Psoas muscle (tissue), 8 donors: ENCODE measurements at regions of chr6 and their contacts with region 1.

Region 1: DNA sequence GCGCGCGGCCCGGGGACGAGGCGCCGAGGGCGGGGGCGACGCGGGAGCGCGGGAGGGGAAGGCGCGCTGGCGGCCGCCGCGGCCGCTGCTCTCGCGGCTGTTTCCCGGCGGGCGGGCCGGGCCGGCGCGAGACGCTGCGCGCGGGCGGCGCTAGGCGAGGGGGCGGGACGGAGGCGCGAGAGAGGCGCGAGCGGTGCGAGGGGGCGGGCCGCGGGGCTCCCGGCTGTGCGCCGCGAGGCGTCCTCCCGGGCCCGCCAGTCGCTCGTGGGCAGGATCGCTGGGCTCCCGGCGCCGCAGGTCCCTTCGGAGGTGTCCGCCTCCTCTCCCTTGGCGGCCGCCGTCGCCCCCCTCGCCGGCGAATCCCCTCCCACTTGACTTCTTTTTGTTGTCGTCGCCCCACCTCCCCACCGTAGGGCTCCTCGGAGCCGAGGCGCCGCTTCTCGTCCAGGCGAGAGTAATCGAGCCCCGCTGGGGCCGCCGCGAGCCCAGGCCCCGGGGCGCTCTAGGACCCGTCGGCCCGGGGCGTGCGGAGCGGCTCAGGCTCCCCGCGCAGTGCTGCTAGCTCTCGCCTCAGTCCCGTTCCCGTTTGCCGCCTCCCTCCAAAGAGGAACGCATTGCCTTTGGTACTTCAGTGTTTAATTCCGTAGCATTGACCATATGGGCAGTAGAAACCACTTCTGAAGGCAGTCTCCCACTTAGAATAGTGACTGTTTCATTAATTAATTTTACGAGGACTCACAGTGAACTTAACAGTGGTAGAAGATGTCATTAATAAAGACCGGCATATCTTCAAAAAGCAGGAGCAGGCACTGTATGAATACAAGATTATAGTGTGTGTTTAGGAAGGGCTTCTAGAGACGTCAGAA is at the start of gene RANBP9:
- DNase-seq: peak; percentile 91 to 94
- ATAC-seq: peak; percentile 91 to 93 (median 92)
- H3K4me3 ChIP-seq: peak within 1 kb of the TSS; percentile 92
- H3K27ac ChIP-seq: peak within 1 kb of the TSS; percentile 97
- H3K4me1 ChIP-seq: peaks cover 25% of the 10 kb centered on the region
- H3K27me3 ChIP-seq: no peaks in the 10 kb centered on the region
- CTCF ChIP-seq: no peak
- total RNA-seq, gene RANBP9: 52.9 to 72.6 (median 58.2) TPM

Region 2: DNA sequence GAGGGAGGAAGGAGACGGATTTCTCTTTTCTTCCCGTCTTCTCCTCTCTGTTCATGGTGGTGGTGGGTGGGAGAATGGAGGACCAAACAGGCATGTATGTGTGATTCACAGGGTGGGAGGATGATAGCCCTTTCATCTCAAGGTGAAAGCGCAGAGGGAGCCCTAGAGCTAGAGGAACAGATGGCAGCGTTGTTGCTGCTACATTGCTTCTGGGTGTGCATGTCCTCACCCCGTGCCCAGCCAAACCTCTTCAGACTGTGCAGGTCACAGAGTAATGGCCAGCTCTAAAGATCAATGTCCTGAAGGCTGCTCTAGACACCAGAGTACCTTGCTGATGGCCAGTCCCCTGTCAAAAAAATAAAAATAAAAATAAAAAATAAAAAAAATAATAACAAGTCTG is 685.4 kb before region 1 on chr6:
- intact Hi-C with region 1: no loop called
- DNase-seq: no peak
- ATAC-seq: no peak
- H3K4me3 ChIP-seq: no peak overlapping the region
- H3K27ac ChIP-seq: no peak overlapping the region
- H3K4me1 ChIP-seq: no peaks in the 10 kb centered on the region
- H3K27me3 ChIP-seq: no peaks in the 10 kb centered on the region
- CTCF ChIP-seq: no peak

Region 3: GRCh38 chr6:13614926-13615798 is 96.8 kb before region 1 on chr6 and contains the start of gene NOL7:
- intact Hi-C with region 1: loop called (anchors 5 kb)
- DNase-seq: peak; percentile 97 to 99
- ATAC-seq: peak; percentile 95 to 98 (median 96)
- H3K4me3 ChIP-seq: peak within 1 kb of the TSS; percentile 75
- H3K27ac ChIP-seq: peak within 1 kb of the TSS; percentile 95
- H3K4me1 ChIP-seq: peaks cover 19% of the 10 kb centered on the region
- H3K27me3 ChIP-seq: no peaks in the 10 kb centered on the region
- CTCF ChIP-seq: peak; percentile 86
- total RNA-seq, gene NOL7: 31.2 to 45.1 (median 41.8) TPM

Region 4: DNA sequence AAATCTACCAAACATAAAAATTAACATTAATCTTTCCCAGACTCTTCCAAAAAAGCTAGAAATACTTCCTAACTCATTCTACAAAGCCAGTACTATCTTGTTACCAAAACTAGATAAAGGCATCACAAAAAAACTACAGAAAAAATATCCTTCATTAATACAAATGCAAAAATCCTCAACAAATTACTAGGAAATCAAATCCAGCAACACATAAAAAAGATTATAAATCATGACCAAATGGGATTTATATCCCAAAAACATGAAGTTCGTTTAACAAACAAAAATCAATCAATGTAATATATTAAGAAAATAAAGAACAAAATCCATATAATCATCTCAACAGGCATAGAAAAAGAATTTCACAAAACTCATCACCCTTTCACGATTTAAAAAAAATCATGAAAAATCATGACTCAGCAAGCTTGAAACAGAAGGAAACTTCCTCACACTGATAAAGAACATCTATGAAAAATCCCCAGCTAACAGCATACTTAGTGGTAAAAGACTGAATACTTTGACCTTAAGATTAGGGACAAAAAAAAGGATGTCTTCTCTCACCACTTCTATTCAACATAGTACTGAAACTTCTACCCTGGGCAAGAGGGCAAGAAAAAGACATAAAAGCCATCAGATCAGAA is 43.6 kb before region 1 on chr6:
- intact Hi-C with region 1: loop called in 1 of 2 experiments (anchors 5 kb)
- DNase-seq: no peak
- ATAC-seq: no peak
- H3K4me3 ChIP-seq: no peak overlapping the region
- H3K27ac ChIP-seq: no peak overlapping the region
- H3K4me1 ChIP-seq: peaks cover 35% of the 10 kb centered on the region
- H3K27me3 ChIP-seq: no peaks in the 10 kb centered on the region
- CTCF ChIP-seq: no peak

Region 5: GRCh38 chr6:13767121-13767808 is 55.3 kb after region 1 on chr6:
- intact Hi-C with region 1: loop called in 1 of 2 experiments (anchors 5 kb)
- DNase-seq: peak; percentile 34 to 70
- ATAC-seq: peak; percentile 80 to 96 (median 92)
- H3K4me3 ChIP-seq: peak overlapping the region; percentile 60
- H3K27ac ChIP-seq: peak overlapping the region; percentile 62
- H3K4me1 ChIP-seq: peaks cover 4% of the 10 kb centered on the region
- H3K27me3 ChIP-seq: no peaks in the 10 kb centered on the region
- CTCF ChIP-seq: no peak

Region 6: GRCh38 chr6:13814176-13814937 is 102.4 kb after region 1 on chr6 and contains the start of gene MCUR1:
- intact Hi-C with region 1: loop called in 1 of 2 experiments (anchors 2 kb)
- DNase-seq: peak; percentile 92 to 93
- ATAC-seq: peak; percentile 93 to 96 (median 94)
- H3K4me3 ChIP-seq: peak within 1 kb of the TSS; percentile 92
- H3K27ac ChIP-seq: peak within 1 kb of the TSS; percentile 96
- H3K4me1 ChIP-seq: peaks cover 28% of the 10 kb centered on the region
- H3K27me3 ChIP-seq: no peaks in the 10 kb centered on the region
- CTCF ChIP-seq: peak; percentile 11
- total RNA-seq, gene MCUR1: 20.5 to 31.9 (median 23.2) TPM

Region 7: DNA sequence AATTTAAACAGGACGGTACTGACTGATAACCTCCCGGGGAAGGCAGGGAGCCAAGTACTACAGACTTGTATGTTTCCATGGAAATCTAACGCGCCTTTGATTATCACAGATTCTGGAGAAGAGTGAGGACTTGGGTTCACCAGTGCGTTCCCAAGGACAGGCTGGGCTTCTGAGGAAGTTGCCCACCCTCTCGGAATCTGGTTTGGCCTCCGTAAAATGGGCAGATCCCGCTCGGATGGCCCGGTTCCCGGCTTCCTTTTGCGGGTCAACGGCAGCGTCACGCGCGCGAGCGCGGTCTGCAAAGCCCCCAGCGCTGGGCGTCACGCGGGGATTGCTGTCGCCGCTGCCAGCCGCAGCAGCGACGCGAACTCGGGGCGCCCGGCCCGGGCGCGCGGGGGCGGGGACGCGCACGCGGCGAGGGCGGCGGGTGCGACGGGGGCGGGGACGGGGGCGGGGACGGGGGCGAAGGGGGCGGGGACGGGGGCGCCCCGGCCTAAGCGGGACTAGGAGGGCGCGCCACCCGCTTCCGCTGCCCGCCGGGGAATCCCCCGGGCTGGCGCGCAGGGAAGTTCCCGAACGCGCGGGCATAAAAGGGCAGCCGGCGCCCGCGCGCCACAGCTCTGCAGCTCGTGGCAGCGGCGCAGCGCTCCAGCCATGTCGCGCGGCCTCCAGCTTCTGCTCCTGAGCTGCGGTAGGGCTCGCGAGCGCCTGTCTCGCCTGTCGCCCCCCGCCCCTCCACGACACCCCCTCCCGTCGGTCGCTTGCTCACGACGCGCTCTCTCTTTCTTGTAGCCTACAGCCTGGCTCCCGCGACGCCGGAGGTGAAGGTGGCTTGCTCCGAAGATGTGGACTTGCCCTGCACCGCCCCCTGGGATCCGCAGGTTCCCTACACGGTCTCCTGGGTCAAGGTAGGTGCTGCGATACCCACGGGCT is 405.5 kb after region 1 on chr6 and contains the start of gene CD83:
- intact Hi-C with region 1: no loop called
- DNase-seq: peak; percentile 73 to 74
- ATAC-seq: peak; percentile 82 to 91 (median 83)
- H3K4me3 ChIP-seq: peak within 1 kb of the TSS; percentile 80
- H3K27ac ChIP-seq: no peak within 1 kb of the TSS
- H3K4me1 ChIP-seq: peaks cover 3% of the 10 kb centered on the region
- H3K27me3 ChIP-seq: no peaks in the 10 kb centered on the region
- CTCF ChIP-seq: peak; percentile 6
- total RNA-seq, gene CD83: 0.46 to 2.1 (median 1.4) TPM